Activated CD8-positive, alpha-beta memory T cell treated with anti-CD3 and anti-CD28 coated beads, Interleukin-2, amount 10 ng/mL, durations not matched to agents 7 days and 5 days (primary cell): ENCODE measurements at regions of chr22 and their contacts with region 1.

Region 1: DNA sequence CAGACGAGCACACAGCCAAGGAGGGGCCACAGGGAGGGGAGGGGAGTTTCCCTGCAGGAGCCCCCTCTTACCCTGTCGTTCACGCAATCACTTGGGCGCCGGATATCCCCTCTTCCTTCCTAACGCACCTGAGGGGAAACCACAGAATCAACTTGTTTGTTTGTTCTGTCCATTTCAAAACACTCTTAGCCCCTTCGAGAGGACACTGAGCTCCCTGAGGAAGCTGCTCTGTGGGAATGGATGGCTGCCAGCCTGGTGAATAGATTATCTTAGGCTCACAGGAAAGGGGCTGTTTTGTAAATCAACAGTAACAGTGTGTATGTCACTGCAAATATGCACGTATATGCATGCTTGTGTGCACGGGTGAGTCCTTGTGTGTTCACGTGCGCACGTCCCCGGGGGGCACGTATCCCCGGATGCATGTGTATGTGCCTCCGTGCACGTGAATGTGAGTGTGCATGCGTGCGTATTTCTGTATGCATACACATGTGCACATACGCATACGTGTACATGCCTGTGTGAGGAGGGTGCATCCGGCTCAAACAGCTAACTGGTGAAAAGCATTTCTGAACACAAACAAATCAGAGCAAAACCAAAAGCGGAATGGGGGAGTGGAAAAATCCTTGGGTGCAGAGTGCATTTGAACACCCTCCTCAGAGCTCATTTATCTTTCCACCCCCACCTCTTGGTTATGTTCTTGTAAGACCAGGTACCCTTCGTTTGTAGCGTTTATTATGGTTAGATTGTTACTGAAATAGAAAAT is 7.2 kb downstream of the ARSA start:
- DNase-seq: peak; percentile 91
- ATAC-seq: peak; percentile 74
- H3K4me3 Mint-ChIP-seq: peak overlapping the region; percentile 79
- H3K27ac Mint-ChIP-seq: peak overlapping the region; percentile 100
- H3K4me1 Mint-ChIP-seq: peaks cover 41% of the 10 kb centered on the region
- H3K27me3 Mint-ChIP-seq: no peaks in the 10 kb centered on the region

Region 2: DNA sequence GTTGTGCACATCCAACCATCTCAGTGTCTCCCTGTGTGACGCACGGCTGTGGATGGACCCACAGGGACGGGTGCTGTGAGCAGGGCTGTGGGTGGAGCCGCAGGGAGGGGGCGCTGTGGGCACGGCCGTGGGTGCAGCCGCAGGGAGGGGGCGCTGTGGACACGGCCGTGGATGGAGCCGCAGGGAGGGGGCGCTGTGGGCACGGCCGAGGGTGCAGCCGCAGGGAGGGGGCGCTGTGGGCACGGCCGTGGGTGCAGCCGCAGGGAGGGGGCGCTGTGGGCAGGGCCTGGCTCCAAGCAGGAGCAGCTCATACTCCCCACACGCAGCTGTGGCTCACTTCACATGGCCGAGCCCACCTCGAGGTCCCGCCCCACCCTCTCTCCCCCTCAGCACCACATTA is 344.6 kb before region 1 on chr22:
- CTCF ChIA-PET with region 1: interaction called, 11 read pairs
- DNase-seq: peak; percentile 80
- ATAC-seq: peak; percentile 52
- H3K4me3 Mint-ChIP-seq: no peak overlapping the region
- H3K27ac Mint-ChIP-seq: no peak overlapping the region
- H3K4me1 Mint-ChIP-seq: peaks cover 4% of the 10 kb centered on the region
- H3K27me3 Mint-ChIP-seq: peaks cover 5% of the 10 kb centered on the region

Region 3: DNA sequence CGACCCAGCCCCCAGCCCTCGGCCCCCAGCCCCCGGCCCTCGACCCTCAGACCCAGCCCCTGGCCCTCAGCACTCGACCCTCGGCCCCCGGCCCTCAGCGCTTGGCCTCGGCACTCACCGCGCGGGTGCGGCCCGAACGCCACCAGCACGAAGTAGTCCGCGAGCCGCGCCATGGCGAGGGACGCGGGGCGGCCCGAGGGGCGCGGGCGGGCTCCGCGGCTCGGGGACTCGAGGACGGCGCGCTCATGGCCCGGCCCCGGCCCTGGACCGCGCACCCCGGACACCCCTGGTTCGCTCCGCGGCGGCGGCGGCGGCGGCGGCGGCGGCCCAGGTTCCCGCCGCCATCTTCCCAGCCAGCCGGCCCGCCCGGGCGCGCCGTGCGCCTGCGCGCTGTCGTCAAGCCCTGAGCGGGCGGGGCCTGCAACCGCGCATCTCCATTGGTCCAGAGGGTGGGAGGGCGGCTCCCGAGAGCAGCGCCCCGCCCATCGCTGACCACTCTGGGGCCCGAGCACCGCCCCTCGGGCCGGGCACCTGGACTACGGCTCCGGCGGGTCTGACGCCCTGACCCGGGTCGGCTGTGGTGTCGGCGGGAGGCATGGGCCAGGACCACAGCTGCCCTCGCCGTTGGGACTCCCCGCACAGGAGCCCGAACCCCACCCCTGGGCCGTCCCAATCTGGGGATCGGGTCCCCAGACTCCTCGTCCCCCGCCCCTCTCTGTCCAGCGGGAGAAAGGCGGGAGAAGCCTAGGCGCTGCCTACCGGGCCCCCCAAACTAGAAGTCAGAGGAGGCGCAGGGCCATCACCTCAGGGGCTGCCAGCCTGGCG is 145.9 kb before region 1 on chr22 and contains the start of gene SBF1:
- CTCF ChIA-PET with region 1: interaction called, 16 read pairs
- DNase-seq: peak; percentile 92
- ATAC-seq: peak; percentile 83
- H3K4me3 Mint-ChIP-seq: peak within 1 kb of the TSS; percentile 93
- H3K27ac Mint-ChIP-seq: peak within 1 kb of the TSS; percentile 95
- H3K4me1 Mint-ChIP-seq: peaks cover 50% of the 10 kb centered on the region
- H3K27me3 Mint-ChIP-seq: peaks cover 10% of the 10 kb centered on the region
- total RNA-seq, gene SBF1: 192 to 207 TPM

Region 4: GRCh38 chr22:50525390-50526068 is 95.2 kb before region 1 on chr22 and contains the start of gene SCO2:
- CTCF ChIA-PET with region 1: interaction called, 81 read pairs
- DNase-seq: peak; percentile 97
- ATAC-seq: peak; percentile 59
- H3K4me3 Mint-ChIP-seq: peak within 1 kb of the TSS; percentile 80
- H3K27ac Mint-ChIP-seq: peak within 1 kb of the TSS; percentile 94
- H3K4me1 Mint-ChIP-seq: peaks cover 44% of the 10 kb centered on the region
- H3K27me3 Mint-ChIP-seq: no peaks in the 10 kb centered on the region
- total RNA-seq, gene SCO2: 9.1 to 11.6 TPM

Region 5: GRCh38 chr22:50537765-50538164 is 83.0 kb before region 1 on chr22:
- CTCF ChIA-PET with region 1: interaction called, 33 read pairs
- DNase-seq: no peak
- ATAC-seq: no peak
- H3K4me3 Mint-ChIP-seq: no peak overlapping the region
- H3K27ac Mint-ChIP-seq: peak overlapping the region; percentile 98
- H3K4me1 Mint-ChIP-seq: peaks cover 74% of the 10 kb centered on the region
- H3K27me3 Mint-ChIP-seq: no peaks in the 10 kb centered on the region

Region 6: DNA sequence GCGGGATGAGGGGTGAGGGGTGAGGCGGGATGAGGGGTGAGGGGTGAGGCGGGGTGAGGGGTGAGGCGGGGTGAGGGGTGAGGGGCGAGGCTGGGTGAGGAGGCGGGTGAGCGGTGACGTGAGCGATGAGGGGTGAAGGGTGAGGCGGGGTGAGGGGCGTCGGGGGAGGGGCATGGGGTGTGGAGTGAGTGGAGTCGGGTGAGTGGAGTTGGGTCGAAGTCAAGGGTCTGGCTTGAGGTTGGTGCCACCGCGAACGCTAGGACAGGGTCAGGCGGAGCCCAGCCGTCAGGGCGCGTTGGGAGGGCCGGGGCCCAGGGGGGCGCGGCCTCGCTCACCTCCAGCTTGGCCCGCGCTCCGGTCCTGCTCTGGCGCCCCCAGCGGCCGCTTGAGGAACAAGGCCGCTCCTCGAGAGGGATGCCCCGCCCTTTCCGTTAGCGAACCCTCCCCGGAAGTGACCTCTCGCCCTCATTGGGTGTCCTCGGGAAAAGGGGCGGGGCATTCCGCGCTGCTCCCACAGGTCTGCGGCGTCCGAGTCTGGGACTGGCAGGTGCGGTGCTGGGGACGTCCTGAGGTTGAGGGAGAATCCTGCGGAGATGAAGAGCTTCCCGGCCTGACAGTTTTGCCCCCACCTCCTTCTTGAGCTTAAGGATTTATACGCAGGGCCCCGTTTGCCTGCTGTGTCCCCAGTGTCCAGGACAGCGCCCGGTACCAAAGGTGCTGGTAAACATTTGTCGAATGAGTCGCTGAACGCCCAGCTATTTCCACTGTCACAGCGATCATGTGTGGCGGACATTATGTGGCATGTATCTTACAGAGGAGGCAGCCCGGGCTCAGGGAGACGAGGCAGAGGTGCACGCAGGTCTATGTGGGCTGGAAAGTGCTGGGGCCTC is 58.0 kb before region 1 on chr22 and contains the start of gene SYCE3:
- CTCF ChIA-PET with region 1: interaction called, 17 read pairs
- DNase-seq: peak; percentile 97
- ATAC-seq: peak; percentile 98
- H3K4me3 Mint-ChIP-seq: peak within 1 kb of the TSS; percentile 84
- H3K27ac Mint-ChIP-seq: peak within 1 kb of the TSS; percentile 79
- H3K4me1 Mint-ChIP-seq: peaks cover 20% of the 10 kb centered on the region
- H3K27me3 Mint-ChIP-seq: peaks cover 10% of the 10 kb centered on the region
- total RNA-seq, gene SYCE3: 0.76 to 0.96 TPM

Region 7: GRCh38 chr22:50582562-50583293 is 38.0 kb before region 1 on chr22 and contains the start of gene CHKB:
- CTCF ChIA-PET with region 1: interaction called, 27 read pairs
- DNase-seq: peak; percentile 99
- ATAC-seq: peak; percentile 94
- H3K4me3 Mint-ChIP-seq: peak within 1 kb of the TSS; percentile 89
- H3K27ac Mint-ChIP-seq: peak within 1 kb of the TSS; percentile 88
- H3K4me1 Mint-ChIP-seq: peaks cover 24% of the 10 kb centered on the region
- H3K27me3 Mint-ChIP-seq: no peaks in the 10 kb centered on the region
- total RNA-seq, gene CHKB: 97.2 to 118 TPM